ENCODE measurements at regions of chr16 and their contacts with region 1.

Region 1: DNA sequence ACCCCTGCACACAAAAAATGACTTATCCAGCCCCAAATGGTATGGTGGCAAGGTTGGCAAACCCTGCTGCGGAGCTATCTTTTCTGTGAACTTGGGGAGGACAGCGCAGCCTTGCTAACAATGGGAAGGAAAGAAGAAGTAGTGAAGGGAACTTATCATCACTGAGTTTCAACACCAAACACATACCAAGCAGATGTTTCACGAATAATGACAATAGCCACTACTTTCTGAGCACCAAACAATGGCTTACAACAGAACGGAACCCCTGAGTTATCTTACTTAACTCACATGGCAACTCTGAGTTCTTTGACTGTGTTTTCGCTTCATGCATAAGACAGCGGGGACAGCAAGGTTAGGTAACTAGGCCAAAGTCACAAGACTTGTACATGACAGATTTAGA is 148.9 kb downstream of the XYLT1 start:
- DNase-seq: peak; percentile 82 to 91 (median 86)
- H3K4me3 ChIP-seq: peak overlapping the region in 1 of 3 experiments; percentile 21
- H3K4me3 Mint-ChIP-seq: peak overlapping the region in 1 of 2 donors; percentile 51
- H3K27ac ChIP-seq: peak overlapping the region; percentile 63 to 89
- H3K27ac Mint-ChIP-seq: peak overlapping the region; percentile 90 to 96 (median 94)
- H3K4me1 ChIP-seq: peaks cover 66 to 71% of the 10 kb centered on the region in 2 donors
- H3K4me1 Mint-ChIP-seq: peaks cover 69% of the 10 kb centered on the region
- H3K27me3 ChIP-seq: no peaks in the 10 kb centered on the region
- H3K27me3 Mint-ChIP-seq: peaks cover 0 to 3% (median 3%) of the 10 kb centered on the region in 3 donors
- CTCF ChIP-seq: no peak

Region 2: DNA sequence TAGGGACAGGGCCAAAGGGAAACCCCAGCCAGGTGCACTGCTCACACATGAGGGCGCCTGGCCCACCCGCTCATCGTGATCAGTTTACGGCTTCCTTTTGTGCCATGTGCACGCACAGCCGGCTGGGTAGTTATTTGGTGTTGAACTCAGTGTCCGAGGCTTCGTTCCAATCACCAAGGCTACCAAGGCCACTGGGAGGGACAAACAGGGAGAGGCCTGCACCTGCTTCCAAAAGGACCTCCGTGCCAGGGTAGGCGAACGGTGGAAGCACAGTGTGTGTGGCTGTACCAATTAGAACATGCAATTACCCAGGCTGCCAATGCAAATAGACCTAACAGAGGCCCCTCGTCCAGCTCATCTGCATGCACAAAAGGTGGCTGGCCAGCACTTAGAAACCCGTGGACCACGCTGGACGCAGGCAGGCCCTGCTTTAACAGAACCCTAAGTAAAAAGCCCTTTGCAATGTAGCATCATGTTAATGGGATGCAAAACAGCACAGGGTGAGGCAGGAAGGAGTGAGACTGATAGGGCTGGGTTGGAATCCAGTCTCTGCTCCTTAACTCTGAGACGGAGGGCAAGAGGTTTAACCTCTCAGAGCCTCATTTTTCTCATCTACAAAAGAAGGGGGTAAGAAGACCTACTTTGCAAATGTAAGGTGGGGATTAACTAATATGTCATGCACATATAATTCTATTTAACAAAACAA is 55.1 kb before region 1 on chr16:
- intact Hi-C with region 1: no loop called
- DNase-seq: no peak
- H3K4me3 ChIP-seq: no peak overlapping the region
- H3K4me3 Mint-ChIP-seq: no peak overlapping the region
- H3K27ac ChIP-seq: no peak overlapping the region
- H3K27ac Mint-ChIP-seq: peak overlapping the region in 1 of 7 donors; percentile 26
- H3K4me1 ChIP-seq: peaks cover 16 to 19% of the 10 kb centered on the region in 2 donors
- H3K4me1 Mint-ChIP-seq: peaks cover 30% of the 10 kb centered on the region
- H3K27me3 ChIP-seq: no peaks in the 10 kb centered on the region
- H3K27me3 Mint-ChIP-seq: peaks cover 0 to 1% (median 0%) of the 10 kb centered on the region in 3 donors
- CTCF ChIP-seq: no peak

Region 3: GRCh38 chr16:17283016-17283415 is 38.8 kb before region 1 on chr16:
- intact Hi-C with region 1: no loop called
- DNase-seq: no peak
- H3K4me3 ChIP-seq: no peak overlapping the region
- H3K4me3 Mint-ChIP-seq: no peak overlapping the region
- H3K27ac ChIP-seq: no peak overlapping the region
- H3K27ac Mint-ChIP-seq: peak overlapping the region in 2 of 7 donors; percentile 28 to 30
- H3K4me1 ChIP-seq: peaks cover 0 to 10% of the 10 kb centered on the region in 2 donors
- H3K4me1 Mint-ChIP-seq: peaks cover 26% of the 10 kb centered on the region
- H3K27me3 ChIP-seq: no peaks in the 10 kb centered on the region
- H3K27me3 Mint-ChIP-seq: peaks cover 0 to 2% (median 0%) of the 10 kb centered on the region in 3 donors
- CTCF ChIP-seq: no peak

Region 4: GRCh38 chr16:17343028-17343427 is 21.2 kb after region 1 on chr16:
- intact Hi-C with region 1: loop called in 1 of 2 experiments (anchors 2 kb)
- DNase-seq: peak in 1 of 3 donors; percentile 34
- H3K4me3 ChIP-seq: no peak overlapping the region
- H3K4me3 Mint-ChIP-seq: no peak overlapping the region
- H3K27ac ChIP-seq: peak overlapping the region; percentile 57 to 78
- H3K27ac Mint-ChIP-seq: peak overlapping the region; percentile 89 to 97 (median 95)
- H3K4me1 ChIP-seq: peaks cover 79 to 81% of the 10 kb centered on the region in 2 donors
- H3K4me1 Mint-ChIP-seq: peaks cover 83% of the 10 kb centered on the region
- H3K27me3 ChIP-seq: no peaks in the 10 kb centered on the region
- H3K27me3 Mint-ChIP-seq: peaks cover 0 to 2% (median 0%) of the 10 kb centered on the region in 3 donors
- CTCF ChIP-seq: no peak

Region 5: GRCh38 chr16:17359788-17360390 is 38.1 kb after region 1 on chr16:
- intact Hi-C with region 1: loop called in 1 of 2 experiments (anchors 5 kb)
- DNase-seq: peak; percentile 90 to 96 (median 93)
- H3K4me3 ChIP-seq: no peak overlapping the region
- H3K4me3 Mint-ChIP-seq: peak overlapping the region in 1 of 2 donors; percentile 7
- H3K27ac ChIP-seq: peak overlapping the region; percentile 54 to 88
- H3K27ac Mint-ChIP-seq: peak overlapping the region; percentile 84 to 98 (median 95)
- H3K4me1 ChIP-seq: peaks cover 63 to 64% of the 10 kb centered on the region in 2 donors
- H3K4me1 Mint-ChIP-seq: peaks cover 67% of the 10 kb centered on the region
- H3K27me3 ChIP-seq: no peaks in the 10 kb centered on the region
- H3K27me3 Mint-ChIP-seq: peaks cover 0 to 2% (median 0%) of the 10 kb centered on the region in 3 donors
- CTCF ChIP-seq: no peak